K562 (cell line): ENCODE measurements at regions of chr12 and their contacts with region 1.

Region 1: DNA sequence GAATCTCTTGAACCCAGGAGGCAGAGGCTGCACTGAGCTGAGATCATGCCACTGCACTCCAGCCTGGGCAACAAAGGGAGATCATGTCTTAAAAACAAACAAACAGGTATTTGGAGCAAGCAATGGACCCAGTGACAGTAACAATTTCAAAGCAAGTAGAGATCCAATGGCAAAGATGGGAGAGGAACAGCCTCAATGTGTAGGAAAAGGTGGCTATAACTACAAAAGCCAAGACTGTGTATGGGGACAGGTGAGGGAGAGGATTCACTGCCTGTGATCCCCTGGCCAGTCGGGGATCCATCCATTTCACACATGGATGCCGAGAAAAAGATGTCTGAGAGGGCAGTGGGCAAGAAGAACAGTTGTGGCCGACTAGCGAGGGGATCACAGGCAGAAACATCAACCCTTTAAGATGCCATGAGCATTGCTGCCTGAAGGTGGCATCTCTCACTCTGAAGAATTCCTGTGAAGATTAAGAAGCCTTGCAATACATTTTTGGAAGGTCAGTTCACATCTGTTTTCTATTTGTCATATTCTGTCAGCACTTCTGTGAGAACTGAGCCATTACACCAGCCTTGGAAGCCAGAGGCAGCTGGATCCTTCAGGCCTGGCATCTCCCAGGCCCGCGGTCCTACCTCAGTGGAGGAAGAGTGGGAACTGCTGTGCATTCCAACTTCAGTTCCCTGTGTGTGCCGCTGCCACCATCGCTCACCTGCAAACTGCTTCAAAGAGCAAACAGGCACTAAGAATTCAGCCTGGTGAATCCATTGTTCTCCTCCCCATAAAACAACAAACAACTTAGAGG is 54.5 kb upstream of the FRS2 start:
- DNase-seq: peak in 3 of 4 experiments; percentile 28 to 55 (median 43)
- ATAC-seq: peak; percentile 93
- H3K4me3 ChIP-seq: no peak overlapping the region
- H3K27ac ChIP-seq: no peak overlapping the region
- H3K4me1 ChIP-seq: peaks cover 3 to 8% of the 10 kb centered on the region in 2 experiments; a peak in 3 of 5 replicates
- H3K27me3 ChIP-seq: no peaks in the 10 kb centered on the region
- CTCF ChIP-seq: peak; percentile 69 to 76 (median 70)
- EP300 ChIP-seq: no peak
- POLR2A ChIP-seq: no peak
- RAD21 ChIP-seq: peak; percentile 63 to 77

Region 2: GRCh38 chr12:69392179-69392928 is 23.3 kb before region 1 on chr12:
- CTCF ChIA-PET with region 1: no interaction called
- POLR2A ChIA-PET with region 1: no interaction called
- in situ Hi-C with region 1: no loop called
- intact Hi-C with region 1: no loop called
- DNase-seq: no peak
- ATAC-seq: no peak
- H3K4me3 ChIP-seq: no peak overlapping the region
- H3K27ac ChIP-seq: no peak overlapping the region
- H3K4me1 ChIP-seq: no peaks in the 10 kb centered on the region; a peak in 1 of 5 replicates
- H3K27me3 ChIP-seq: no peaks in the 10 kb centered on the region
- CTCF ChIP-seq: no peak
- EP300 ChIP-seq: no peak
- POLR2A ChIP-seq: no peak
- RAD21 ChIP-seq: no peak

Region 3: GRCh38 chr12:69464428-69464827 is 48.8 kb after region 1 on chr12:
- CTCF ChIA-PET with region 1: no interaction called
- POLR2A ChIA-PET with region 1: no interaction called
- in situ Hi-C with region 1: no loop called
- intact Hi-C with region 1: loop called (anchors 5 kb)
- DNase-seq: no peak
- ATAC-seq: no peak
- H3K4me3 ChIP-seq: no peak overlapping the region
- H3K27ac ChIP-seq: no peak overlapping the region
- H3K4me1 ChIP-seq: no peaks in the 10 kb centered on the region
- H3K27me3 ChIP-seq: no peaks in the 10 kb centered on the region
- CTCF ChIP-seq: no peak
- EP300 ChIP-seq: no peak
- POLR2A ChIP-seq: no peak
- RAD21 ChIP-seq: no peak

Region 4: DNA sequence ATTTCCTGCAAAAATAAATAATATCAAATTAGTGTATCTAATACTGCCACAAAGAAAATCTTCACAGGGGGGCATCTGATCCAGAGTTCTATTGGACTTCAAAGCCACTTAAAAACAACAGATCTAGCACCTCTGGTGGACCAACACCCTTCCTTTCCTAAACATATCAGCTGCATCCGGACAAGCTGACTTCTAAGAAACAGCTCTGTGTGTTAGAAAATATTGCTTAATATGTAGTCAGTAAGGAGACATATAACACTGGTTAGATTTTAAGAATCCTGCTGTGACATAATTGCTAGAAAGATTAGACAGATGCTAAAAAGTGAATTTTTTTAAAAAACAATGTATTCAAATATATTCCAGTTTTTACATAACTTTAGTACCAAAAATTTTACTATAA is 1282.7 kb after region 1 on chr12:
- CTCF ChIA-PET with region 1: no interaction called
- POLR2A ChIA-PET with region 1: no interaction called
- in situ Hi-C with region 1: no loop called
- intact Hi-C with region 1: no loop called
- DNase-seq: peak in 1 of 4 experiments; percentile 36
- ATAC-seq: no peak
- H3K4me3 ChIP-seq: no peak overlapping the region
- H3K27ac ChIP-seq: no peak overlapping the region; the same call in 2 of the 3 replicates
- H3K4me1 ChIP-seq: peaks cover 0 to 5% of the 10 kb centered on the region in 2 experiments; a peak in 1 of 5 replicates
- H3K27me3 ChIP-seq: no peaks in the 10 kb centered on the region
- CTCF ChIP-seq: no peak
- EP300 ChIP-seq: peak; percentile 27; the same call in 1 of the 2 replicates
- POLR2A ChIP-seq: no peak
- RAD21 ChIP-seq: no peak; a peak in 1 of 4 replicates